ENCODE measurements at regions of chr1 and their contacts with region 1.

Region 1: DNA sequence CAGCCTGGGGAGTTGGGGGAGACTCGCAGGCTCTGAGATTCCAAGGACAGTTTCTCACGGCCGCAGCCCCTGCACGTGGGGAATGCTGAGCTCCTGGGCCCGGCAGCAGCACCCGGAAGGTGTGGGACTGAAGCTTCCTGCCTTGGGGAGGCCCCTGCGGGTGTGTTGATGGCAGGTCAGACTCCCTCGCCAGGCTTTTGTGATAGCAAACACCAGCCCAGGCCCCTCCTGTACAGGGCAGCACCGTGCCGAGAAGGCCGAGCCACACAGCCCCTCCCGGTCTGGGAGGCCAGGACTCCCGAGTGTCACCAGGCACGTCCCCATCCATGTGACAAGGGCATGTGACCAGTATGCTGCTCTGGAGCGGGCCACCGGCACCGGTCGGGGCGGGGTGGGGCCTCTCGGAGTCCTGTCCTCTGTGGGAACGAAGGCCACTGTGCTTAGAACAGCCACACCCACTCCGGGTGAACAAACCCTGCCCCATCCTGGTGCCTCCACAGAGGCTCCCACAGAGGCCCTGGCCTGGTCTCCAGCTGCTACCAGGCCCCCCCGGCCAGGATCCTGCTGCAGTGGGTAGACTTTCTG is 31.1 kb upstream of the ARHGEF16 start:
- DNase-seq: no peak
- H3K4me3 Mint-ChIP-seq: no peak overlapping the region
- H3K27ac Mint-ChIP-seq: no peak overlapping the region
- H3K4me1 Mint-ChIP-seq: no peaks in the 10 kb centered on the region
- H3K27me3 Mint-ChIP-seq: peaks cover 4% of the 10 kb centered on the region

Region 2: DNA sequence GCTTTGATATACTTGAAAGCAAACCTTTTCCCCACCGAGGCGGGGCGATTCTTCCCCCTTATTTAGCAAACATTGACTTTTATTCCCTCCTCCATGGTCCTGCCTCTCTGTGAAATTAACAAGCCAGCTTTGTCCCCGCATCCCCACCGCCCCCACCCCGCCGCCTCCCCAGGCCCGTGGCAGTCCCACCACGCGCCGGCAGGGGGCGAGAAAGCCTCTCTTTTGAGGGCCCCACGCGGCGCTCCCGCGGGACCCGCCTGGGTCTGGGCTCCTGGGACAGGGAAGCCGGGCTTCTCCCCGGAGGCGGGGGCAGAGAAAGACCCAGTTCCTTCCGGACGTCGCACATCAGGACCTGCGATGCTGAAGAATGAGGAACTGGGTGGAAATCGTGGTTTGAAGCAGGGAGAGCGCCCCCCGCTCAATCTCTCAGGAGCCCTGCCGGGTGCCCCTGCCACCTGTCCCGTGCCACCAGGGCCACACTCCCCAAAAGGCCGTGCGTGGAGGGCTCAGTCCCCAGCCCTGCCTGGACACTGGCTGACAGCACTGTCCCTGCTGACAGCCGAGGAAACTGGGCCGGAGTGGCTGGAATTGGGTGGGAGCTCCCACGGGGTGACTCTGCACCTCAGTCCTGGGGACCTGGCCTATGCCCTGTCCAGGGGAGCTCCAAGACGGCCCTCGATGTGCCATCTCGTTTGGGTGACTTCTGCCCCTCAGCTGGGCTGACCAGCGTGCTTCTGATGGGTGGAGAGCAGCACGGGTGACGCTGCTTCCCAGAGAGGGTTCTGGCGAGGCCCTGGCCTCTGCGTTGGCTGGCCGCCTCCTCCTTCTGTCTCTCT is 410.7 kb before region 1 on chr1:
- CTCF ChIA-PET with region 1: interaction called, 10 read pairs
- DNase-seq: peak; percentile 62
- H3K4me3 Mint-ChIP-seq: no peak overlapping the region
- H3K27ac Mint-ChIP-seq: no peak overlapping the region
- H3K4me1 Mint-ChIP-seq: peaks cover 2% of the 10 kb centered on the region
- H3K27me3 Mint-ChIP-seq: peaks cover 23% of the 10 kb centered on the region

Measured in activated naive CD4-positive, alpha-beta T cell treated with anti-CD3 and anti-CD28 coated beads, Interleukin-2, amount 10 ng/mL, durations not matched to agents 7 days and 5 days (primary cell).